ENCODE measurements at regions of chr7 and their contacts with region 1.

Region 1: GRCh38 chr7:36487756-36488336 is 98.2 kb downstream of the ANLN start:
- DNase-seq: no peak
- H3K4me3 ChIP-seq: no peak overlapping the region
- H3K27ac ChIP-seq: no peak overlapping the region
- H3K4me1 ChIP-seq: peaks cover 0 to 3% (median 0%) of the 10 kb centered on the region in 4 donors
- H3K27me3 ChIP-seq: no peaks in the 10 kb centered on the region
- CTCF ChIP-seq: peak; percentile 51 to 80 (median 66)
- EP300 ChIP-seq: no peak
- POLR2A ChIP-seq: no peak

Region 2: GRCh38 chr7:36659172-36659516 is 171.3 kb after region 1 on chr7:
- in situ Hi-C with region 1: loop called in 1 of 4 experiments (anchors 10 kb)
- intact Hi-C with region 1: no loop called
- DNase-seq: no peak
- H3K4me3 ChIP-seq: peak overlapping the region in 1 of 4 donors; percentile 43
- H3K27ac ChIP-seq: peak overlapping the region; percentile 38 to 84 (median 60)
- H3K4me1 ChIP-seq: peaks cover 4 to 47% (median 31%) of the 10 kb centered on the region in 4 donors
- H3K27me3 ChIP-seq: no peaks in the 10 kb centered on the region
- CTCF ChIP-seq: no peak
- EP300 ChIP-seq: no peak
- POLR2A ChIP-seq: no peak

Region 3: GRCh38 chr7:36670585-36671431 is 183.0 kb after region 1 on chr7:
- in situ Hi-C with region 1: loop called in 3 of 4 experiments (anchors 5 to 10 kb)
- intact Hi-C with region 1: no loop called
- DNase-seq: peak; percentile 79
- H3K4me3 ChIP-seq: no peak overlapping the region
- H3K27ac ChIP-seq: no peak overlapping the region
- H3K4me1 ChIP-seq: peaks cover 0 to 17% (median 5%) of the 10 kb centered on the region in 4 donors
- H3K27me3 ChIP-seq: no peaks in the 10 kb centered on the region
- CTCF ChIP-seq: peak; percentile 73 to 90 (median 85)
- EP300 ChIP-seq: no peak
- POLR2A ChIP-seq: no peak

Region 4: GRCh38 chr7:37181550-37181932 is 693.7 kb after region 1 on chr7:
- in situ Hi-C with region 1: loop called in 2 of 4 experiments (anchors 10 to 25 kb)
- intact Hi-C with region 1: no loop called
- DNase-seq: no peak
- H3K4me3 ChIP-seq: no peak overlapping the region
- H3K27ac ChIP-seq: no peak overlapping the region
- H3K4me1 ChIP-seq: peaks cover 0 to 10% (median 0%) of the 10 kb centered on the region in 4 donors
- H3K27me3 ChIP-seq: no peaks in the 10 kb centered on the region
- CTCF ChIP-seq: no peak
- EP300 ChIP-seq: no peak
- POLR2A ChIP-seq: no peak

Region 5: GRCh38 chr7:37198906-37199485 is 711.1 kb after region 1 on chr7:
- in situ Hi-C with region 1: loop called in 1 of 4 experiments (anchors 25 kb)
- intact Hi-C with region 1: no loop called
- DNase-seq: peak; percentile 81
- H3K4me3 ChIP-seq: no peak overlapping the region
- H3K27ac ChIP-seq: no peak overlapping the region
- H3K4me1 ChIP-seq: peaks cover 0 to 19% (median 17%) of the 10 kb centered on the region in 4 donors
- H3K27me3 ChIP-seq: no peaks in the 10 kb centered on the region
- CTCF ChIP-seq: peak; percentile 83 to 90 (median 84)
- EP300 ChIP-seq: no peak
- POLR2A ChIP-seq: no peak

Measured in transverse colon (tissue), 4 donors.